HCT116 (cell line): ENCODE measurements at regions of chr4 and their contacts with region 1.

Region 1: GRCh38 chr4:26319467-26319948 is 1.3 kb upstream of the RBPJ start:
- DNase-seq: peak; percentile 99
- ATAC-seq: peak; percentile 78
- H3K4me3 ChIP-seq: peak overlapping the region; percentile 79 to 93
- H3K27ac ChIP-seq: peak overlapping the region; percentile 89
- H3K4me1 ChIP-seq: peaks cover 9 to 39% of the 10 kb centered on the region in 2 experiments; a peak in 3 of 4 replicates
- H3K27me3 ChIP-seq: no peaks in the 10 kb centered on the region
- CTCF ChIP-seq: no peak
- POLR2A ChIP-seq: no peak
- RAD21 ChIP-seq: no peak

Region 2: DNA sequence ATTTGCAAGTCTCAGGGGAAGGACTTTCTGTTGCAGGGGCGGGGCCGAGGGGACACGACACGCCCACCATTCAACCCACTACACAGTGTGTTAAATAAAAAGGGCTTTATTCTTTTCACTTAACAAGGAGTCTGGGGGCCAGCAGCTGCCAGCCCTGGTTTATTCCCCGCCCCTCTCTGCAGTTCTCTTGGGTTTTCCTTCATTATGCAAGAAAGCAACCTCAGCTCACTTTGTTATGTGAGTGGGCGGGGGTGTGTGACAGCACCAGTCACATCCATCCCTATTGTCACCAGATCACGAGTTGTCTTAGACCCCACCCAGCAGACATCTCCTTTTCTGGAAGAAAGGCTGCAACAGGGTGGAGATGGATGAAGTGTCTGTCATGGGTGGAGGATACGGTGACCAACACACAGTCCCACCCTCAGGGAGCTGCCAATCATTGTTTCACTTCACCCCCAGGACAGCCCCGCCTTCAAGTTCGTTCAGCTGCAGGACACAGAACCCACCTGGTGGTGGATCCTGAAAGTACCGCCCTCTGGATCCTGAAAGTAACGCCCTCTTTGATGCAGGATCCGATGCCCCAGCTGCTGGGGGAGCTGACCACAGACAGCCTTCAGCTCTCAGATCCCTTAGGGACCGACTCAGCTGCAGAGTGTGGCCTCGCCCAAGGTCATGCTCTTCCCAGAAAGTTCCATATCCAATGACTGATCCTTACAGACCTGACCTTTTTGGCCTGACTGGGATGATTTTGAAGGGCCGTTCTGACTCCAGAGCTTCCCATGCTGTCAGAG is 325.9 kb before region 1 on chr4:
- CTCF ChIA-PET with region 1: no interaction called
- POLR2A ChIA-PET with region 1: no interaction called
- RAD21 ChIA-PET with region 1: no interaction called
- intact Hi-C with region 1: loop called (anchors 2 kb)
- DNase-seq: peak; percentile 56
- ATAC-seq: peak; percentile 87
- H3K4me3 ChIP-seq: no peak overlapping the region
- H3K27ac ChIP-seq: no peak overlapping the region
- H3K4me1 ChIP-seq: peaks cover 11 to 26% of the 10 kb centered on the region in 2 experiments; a peak in 3 of 4 replicates
- H3K27me3 ChIP-seq: no peaks in the 10 kb centered on the region
- CTCF ChIP-seq: peak in 2 of 3 experiments; percentile 64 to 67; a peak in 4 of 6 replicates
- POLR2A ChIP-seq: no peak
- RAD21 ChIP-seq: peak; percentile 32

Region 3: GRCh38 chr4:26069218-26069617 is 250.3 kb before region 1 on chr4:
- CTCF ChIA-PET with region 1: interaction called, 8 read pairs
- POLR2A ChIA-PET with region 1: no interaction called
- RAD21 ChIA-PET with region 1: no interaction called
- intact Hi-C with region 1: loop called (anchors 5 kb)
- DNase-seq: no peak
- ATAC-seq: peak; percentile 91
- H3K4me3 ChIP-seq: no peak overlapping the region
- H3K27ac ChIP-seq: no peak overlapping the region
- H3K4me1 ChIP-seq: peaks cover 0 to 10% of the 10 kb centered on the region in 2 experiments; a peak in 1 of 4 replicates
- H3K27me3 ChIP-seq: no peaks in the 10 kb centered on the region
- CTCF ChIP-seq: peak; percentile 42 to 71 (median 65); a peak in 5 of 6 replicates
- POLR2A ChIP-seq: no peak
- RAD21 ChIP-seq: peak; percentile 75

Region 4: DNA sequence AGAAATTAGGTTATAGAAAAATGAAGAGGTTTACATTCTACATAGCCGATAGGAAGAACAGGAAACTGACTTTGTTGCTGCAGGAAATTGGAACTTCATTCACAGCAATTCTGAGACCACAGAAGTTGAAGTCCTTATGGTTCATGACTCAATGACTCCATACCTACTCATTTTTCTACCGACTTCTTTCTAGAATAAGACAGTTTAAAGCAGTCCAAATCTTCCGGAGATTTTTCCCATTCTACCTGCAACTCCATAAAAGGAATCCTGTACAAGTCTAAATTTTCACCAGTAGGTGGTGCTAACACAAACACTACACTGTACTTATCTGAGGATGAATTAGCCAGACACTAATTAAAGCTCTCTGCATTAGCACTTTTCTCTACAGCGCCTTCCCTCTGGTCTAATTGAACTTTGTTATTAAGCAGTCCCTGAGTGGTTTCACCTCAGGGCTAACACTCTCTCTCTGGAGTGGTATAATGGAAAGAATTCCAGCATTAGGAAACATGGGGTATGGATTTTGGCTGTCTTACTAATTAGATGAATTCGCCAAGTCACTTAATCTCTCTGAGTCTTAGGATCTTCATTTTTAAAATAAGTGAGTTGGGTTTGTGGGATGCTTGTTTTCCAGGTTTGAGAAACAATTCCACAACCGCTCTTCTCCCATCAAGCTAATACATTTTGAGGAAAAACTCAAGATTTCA is 237.6 kb before region 1 on chr4:
- CTCF ChIA-PET with region 1: interaction called, 3 read pairs
- POLR2A ChIA-PET with region 1: no interaction called
- RAD21 ChIA-PET with region 1: interaction called in 1 of 2 experiments, 3 read pairs
- intact Hi-C with region 1: loop called (anchors 2 kb)
- DNase-seq: peak; percentile 63
- ATAC-seq: peak; percentile 82
- H3K4me3 ChIP-seq: no peak overlapping the region
- H3K27ac ChIP-seq: no peak overlapping the region
- H3K4me1 ChIP-seq: peaks cover 0 to 23% of the 10 kb centered on the region in 2 experiments; a peak in 2 of 4 replicates
- H3K27me3 ChIP-seq: no peaks in the 10 kb centered on the region
- CTCF ChIP-seq: peak; percentile 61 to 83 (median 74)
- POLR2A ChIP-seq: no peak
- RAD21 ChIP-seq: peak; percentile 87

Region 5: GRCh38 chr4:26197018-26197779 is 122.3 kb before region 1 on chr4:
- CTCF ChIA-PET with region 1: no interaction called
- POLR2A ChIA-PET with region 1: interaction called, 15 read pairs
- RAD21 ChIA-PET with region 1: no interaction called
- intact Hi-C with region 1: loop called (anchors 2 kb)
- DNase-seq: peak; percentile 98
- ATAC-seq: peak; percentile 94
- H3K4me3 ChIP-seq: peak overlapping the region; percentile 15 to 24; a peak in 2 of 4 replicates
- H3K27ac ChIP-seq: peak overlapping the region; percentile 84
- H3K4me1 ChIP-seq: peaks cover 19 to 41% of the 10 kb centered on the region in 2 experiments
- H3K27me3 ChIP-seq: no peaks in the 10 kb centered on the region
- CTCF ChIP-seq: no peak
- POLR2A ChIP-seq: no peak
- RAD21 ChIP-seq: peak; percentile 61

Region 6: DNA sequence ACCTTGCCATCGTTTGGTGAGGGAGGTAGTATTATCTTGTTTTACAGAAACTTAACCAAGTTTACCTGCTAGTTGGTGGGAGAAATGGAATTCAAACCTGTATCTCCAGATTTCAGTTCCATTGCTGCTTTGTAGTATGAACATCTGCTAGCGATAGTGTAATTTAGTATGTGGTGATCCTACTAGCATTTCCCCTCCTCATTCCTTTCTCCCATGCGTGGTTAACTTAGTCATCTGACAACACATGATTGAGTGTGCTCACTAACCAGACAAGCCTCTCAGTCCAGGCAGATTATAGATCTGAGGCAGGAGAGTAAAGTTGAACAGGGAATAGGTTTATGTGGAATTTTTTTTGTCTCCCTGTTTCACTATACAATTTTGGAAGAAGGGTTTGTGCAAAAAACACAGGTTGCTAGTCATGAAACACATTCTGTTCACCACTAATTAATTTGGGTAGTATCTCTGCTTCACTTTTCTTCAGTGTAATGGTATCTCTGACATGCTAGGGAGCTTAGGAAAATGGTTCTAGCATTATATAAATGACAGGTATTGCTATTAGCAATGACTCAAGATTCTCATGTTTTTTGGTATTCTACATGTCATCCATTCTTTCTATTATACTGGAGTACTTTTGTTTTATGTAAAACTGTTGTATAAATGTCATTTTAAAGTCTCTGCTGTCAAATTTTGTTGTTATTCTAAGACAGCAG is 23.0 kb after region 1 on chr4:
- CTCF ChIA-PET with region 1: no interaction called
- POLR2A ChIA-PET with region 1: no interaction called
- RAD21 ChIA-PET with region 1: no interaction called
- intact Hi-C with region 1: no loop called
- DNase-seq: peak; percentile 23
- ATAC-seq: peak; percentile 88
- H3K4me3 ChIP-seq: no peak overlapping the region
- H3K27ac ChIP-seq: no peak overlapping the region
- H3K4me1 ChIP-seq: peaks cover 8 to 31% of the 10 kb centered on the region in 2 experiments
- H3K27me3 ChIP-seq: no peaks in the 10 kb centered on the region
- CTCF ChIP-seq: no peak
- POLR2A ChIP-seq: no peak
- RAD21 ChIP-seq: no peak